Psoas muscle (tissue), 8 donors: ENCODE measurements at regions of chr2 and their contacts with region 1.

Region 1: GRCh38 chr2:74876081-74876886 is 42.4 kb downstream of the HK2 start:
- DNase-seq: no peak
- ATAC-seq: peak; percentile 62 to 81 (median 68)
- H3K4me3 ChIP-seq: no peak overlapping the region
- H3K27ac ChIP-seq: peak overlapping the region; percentile 44
- H3K4me1 ChIP-seq: peaks cover 8% of the 10 kb centered on the region
- H3K27me3 ChIP-seq: no peaks in the 10 kb centered on the region
- CTCF ChIP-seq: peak; percentile 73

Region 2: DNA sequence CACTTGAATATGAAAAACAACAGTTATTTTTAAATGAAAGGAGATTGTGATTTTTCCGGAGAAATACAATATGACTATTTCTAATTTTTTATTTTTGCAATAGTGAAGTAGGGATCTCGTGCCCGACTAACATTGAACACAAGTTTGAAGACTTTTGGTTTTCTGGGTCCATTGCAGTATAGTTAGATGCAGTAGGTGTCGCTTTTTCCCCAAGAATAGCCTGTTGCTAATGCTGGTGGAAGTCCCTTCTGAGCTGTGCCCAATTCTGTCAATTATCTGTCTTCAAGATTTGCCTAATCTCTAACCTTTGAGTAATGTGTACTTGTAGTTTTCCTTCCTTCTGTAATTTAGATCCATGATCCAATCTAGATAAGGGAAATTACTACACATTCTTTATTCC is 185.7 kb before region 1 on chr2:
- intact Hi-C with region 1: loop called (anchors 1 to 5 kb)
- DNase-seq: no peak
- ATAC-seq: peak; percentile 70 to 87 (median 75)
- H3K4me3 ChIP-seq: no peak overlapping the region
- H3K27ac ChIP-seq: no peak overlapping the region
- H3K4me1 ChIP-seq: peaks cover 8% of the 10 kb centered on the region
- H3K27me3 ChIP-seq: no peaks in the 10 kb centered on the region
- CTCF ChIP-seq: peak; percentile 76

Region 3: GRCh38 chr2:74715078-74715791 is 161.0 kb before region 1 on chr2:
- intact Hi-C with region 1: loop called (anchors 2 to 5 kb)
- DNase-seq: peak; percentile 80 to 86
- ATAC-seq: peak; percentile 75 to 87 (median 84)
- H3K4me3 ChIP-seq: peak overlapping the region; percentile 81
- H3K27ac ChIP-seq: peak overlapping the region; percentile 71
- H3K4me1 ChIP-seq: peaks cover 18% of the 10 kb centered on the region
- H3K27me3 ChIP-seq: peaks cover 0 to 4% (median 0%) of the 10 kb centered on the region in 3 donors
- CTCF ChIP-seq: peak; percentile 93

Region 4: GRCh38 chr2:74833418-74834233 is 42.7 kb before region 1 on chr2 and contains the start of gene HK2:
- intact Hi-C with region 1: loop called (anchors 5 kb)
- DNase-seq: peak; percentile 86 to 93
- ATAC-seq: peak; percentile 90 to 92 (median 91)
- H3K4me3 ChIP-seq: peak within 1 kb of the TSS; percentile 75
- H3K27ac ChIP-seq: peak within 1 kb of the TSS; percentile 81
- H3K4me1 ChIP-seq: peaks cover 19% of the 10 kb centered on the region
- H3K27me3 ChIP-seq: no peaks in the 10 kb centered on the region
- CTCF ChIP-seq: no peak
- total RNA-seq, gene HK2: 47.9 to 150 (median 90.9) TPM